Activated naive CD4-positive, alpha-beta T cell treated with anti-CD3 and anti-CD28 coated beads for 36 hours (primary cell): ENCODE measurements at regions of chr18 and their contacts with region 1.

Region 1: DNA sequence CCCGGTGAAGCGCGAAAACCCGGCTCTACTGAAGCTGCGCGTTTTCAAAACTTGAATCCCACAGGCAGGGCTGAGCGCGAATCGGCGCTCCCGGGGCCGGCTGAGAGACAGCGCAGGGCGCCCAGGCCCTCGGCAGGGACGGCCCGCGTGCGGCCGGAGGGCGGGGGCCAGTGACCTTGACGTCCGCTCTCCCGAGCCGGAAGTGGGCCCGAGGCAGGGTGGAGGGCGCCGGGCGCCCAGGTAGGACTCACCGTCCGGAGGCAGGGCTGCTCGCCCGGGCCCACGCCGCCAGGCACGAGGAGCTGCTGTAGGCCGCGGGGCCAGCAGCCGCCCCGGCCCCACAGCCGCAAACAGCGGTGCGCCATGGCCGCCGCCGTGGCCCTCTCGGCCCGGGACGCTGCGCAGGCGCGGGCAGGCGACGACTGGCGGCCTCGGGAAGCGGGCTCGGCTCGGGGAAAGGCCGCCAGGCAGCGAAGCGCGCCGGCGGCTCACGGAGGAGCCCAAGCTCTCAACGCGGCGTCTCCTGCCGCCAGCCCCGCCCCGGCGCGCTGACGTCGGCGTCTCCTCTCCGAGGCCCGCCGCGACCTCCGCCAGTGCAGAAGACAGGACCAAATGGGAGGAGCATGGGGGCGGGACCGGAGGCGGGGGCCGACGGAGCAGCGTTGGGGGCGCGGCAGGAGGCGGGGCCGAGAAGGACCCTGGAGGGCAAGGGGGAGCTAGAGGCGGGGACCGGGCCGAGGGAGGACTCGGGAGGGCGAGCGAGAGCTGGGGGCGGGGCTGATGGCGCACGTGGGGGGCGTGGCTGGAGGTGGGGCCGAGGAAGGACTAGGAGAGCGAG is at the start of gene AFG3L2:
- DNase-seq: peak; percentile 100
- H3K4me3 Mint-ChIP-seq: peak within 1 kb of the TSS; percentile 90
- H3K27ac Mint-ChIP-seq: peak within 1 kb of the TSS; percentile 82
- H3K4me1 Mint-ChIP-seq: peaks cover 47% of the 10 kb centered on the region
- H3K27me3 Mint-ChIP-seq: no peaks in the 10 kb centered on the region
- total RNA-seq, gene AFG3L2: 41.8 to 42.9 TPM

Region 2: DNA sequence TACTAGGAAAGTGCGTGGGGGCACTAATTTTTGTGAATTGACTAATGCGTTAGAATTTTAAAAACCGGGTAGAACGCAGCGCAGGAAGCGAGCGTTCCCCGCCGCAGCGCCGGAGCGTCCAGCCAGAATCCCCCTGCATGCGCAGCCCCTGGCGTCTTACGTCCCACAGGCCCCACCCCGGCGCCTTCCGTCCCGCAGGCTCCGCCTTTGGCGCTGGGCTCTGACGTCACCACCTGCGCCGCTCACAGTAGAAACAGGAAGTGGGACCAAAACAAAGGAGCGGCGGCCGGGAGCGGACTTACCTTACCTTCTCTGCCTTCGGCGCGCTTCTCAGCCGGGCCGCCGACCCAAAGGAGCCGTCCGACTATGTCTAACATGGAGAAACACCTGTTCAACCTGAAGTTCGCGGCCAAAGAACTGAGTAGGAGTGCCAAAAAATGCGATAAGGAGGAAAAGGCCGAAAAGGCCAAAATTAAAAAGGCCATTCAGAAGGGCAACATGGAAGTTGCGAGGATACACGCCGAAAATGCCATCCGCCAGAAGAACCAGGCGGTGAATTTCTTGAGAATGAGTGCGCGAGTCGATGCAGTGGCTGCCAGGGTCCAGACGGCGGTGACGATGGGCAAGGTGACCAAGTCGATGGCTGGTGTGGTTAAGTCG is 525.7 kb before region 1 on chr18 and contains the start of gene CHMP1B:
- CTCF ChIA-PET with region 1: no interaction called
- intact Hi-C with region 1: loop called (anchors 1 kb)
- DNase-seq: peak; percentile 98
- H3K4me3 Mint-ChIP-seq: peak within 1 kb of the TSS; percentile 100
- H3K27ac Mint-ChIP-seq: peak within 1 kb of the TSS; percentile 100
- H3K4me1 Mint-ChIP-seq: peaks cover 31% of the 10 kb centered on the region
- H3K27me3 Mint-ChIP-seq: no peaks in the 10 kb centered on the region
- total RNA-seq, gene CHMP1B: 23.2 TPM

Region 3: GRCh38 chr18:12053289-12053688 is 323.6 kb before region 1 on chr18:
- CTCF ChIA-PET with region 1: no interaction called
- intact Hi-C with region 1: no loop called
- DNase-seq: no peak
- H3K4me3 Mint-ChIP-seq: no peak overlapping the region
- H3K27ac Mint-ChIP-seq: no peak overlapping the region
- H3K4me1 Mint-ChIP-seq: peaks cover 6% of the 10 kb centered on the region
- H3K27me3 Mint-ChIP-seq: no peaks in the 10 kb centered on the region

Region 4: GRCh38 chr18:12308386-12309100 is 68.4 kb before region 1 on chr18:
- CTCF ChIA-PET with region 1: no interaction called
- intact Hi-C with region 1: loop called (anchors 2 kb)
- DNase-seq: peak; percentile 36
- H3K4me3 Mint-ChIP-seq: peak overlapping the region; percentile 62
- H3K27ac Mint-ChIP-seq: no peak overlapping the region
- H3K4me1 Mint-ChIP-seq: peaks cover 10% of the 10 kb centered on the region
- H3K27me3 Mint-ChIP-seq: peaks cover 43% of the 10 kb centered on the region

Region 5: GRCh38 chr18:12420831-12421421 is 44.0 kb after region 1 on chr18:
- CTCF ChIA-PET with region 1: no interaction called
- intact Hi-C with region 1: loop called (anchors 1 kb)
- DNase-seq: no peak
- H3K4me3 Mint-ChIP-seq: peak overlapping the region; percentile 68
- H3K27ac Mint-ChIP-seq: no peak overlapping the region
- H3K4me1 Mint-ChIP-seq: peaks cover 5% of the 10 kb centered on the region
- H3K27me3 Mint-ChIP-seq: peaks cover 4% of the 10 kb centered on the region

Region 6: GRCh38 chr18:12838178-12838634 is 461.3 kb after region 1 on chr18:
- CTCF ChIA-PET with region 1: no interaction called
- intact Hi-C with region 1: loop called (anchors 1 kb)
- DNase-seq: no peak
- H3K4me3 Mint-ChIP-seq: peak overlapping the region; percentile 46
- H3K27ac Mint-ChIP-seq: peak overlapping the region; percentile 84
- H3K4me1 Mint-ChIP-seq: peaks cover 52% of the 10 kb centered on the region
- H3K27me3 Mint-ChIP-seq: no peaks in the 10 kb centered on the region

Region 7: DNA sequence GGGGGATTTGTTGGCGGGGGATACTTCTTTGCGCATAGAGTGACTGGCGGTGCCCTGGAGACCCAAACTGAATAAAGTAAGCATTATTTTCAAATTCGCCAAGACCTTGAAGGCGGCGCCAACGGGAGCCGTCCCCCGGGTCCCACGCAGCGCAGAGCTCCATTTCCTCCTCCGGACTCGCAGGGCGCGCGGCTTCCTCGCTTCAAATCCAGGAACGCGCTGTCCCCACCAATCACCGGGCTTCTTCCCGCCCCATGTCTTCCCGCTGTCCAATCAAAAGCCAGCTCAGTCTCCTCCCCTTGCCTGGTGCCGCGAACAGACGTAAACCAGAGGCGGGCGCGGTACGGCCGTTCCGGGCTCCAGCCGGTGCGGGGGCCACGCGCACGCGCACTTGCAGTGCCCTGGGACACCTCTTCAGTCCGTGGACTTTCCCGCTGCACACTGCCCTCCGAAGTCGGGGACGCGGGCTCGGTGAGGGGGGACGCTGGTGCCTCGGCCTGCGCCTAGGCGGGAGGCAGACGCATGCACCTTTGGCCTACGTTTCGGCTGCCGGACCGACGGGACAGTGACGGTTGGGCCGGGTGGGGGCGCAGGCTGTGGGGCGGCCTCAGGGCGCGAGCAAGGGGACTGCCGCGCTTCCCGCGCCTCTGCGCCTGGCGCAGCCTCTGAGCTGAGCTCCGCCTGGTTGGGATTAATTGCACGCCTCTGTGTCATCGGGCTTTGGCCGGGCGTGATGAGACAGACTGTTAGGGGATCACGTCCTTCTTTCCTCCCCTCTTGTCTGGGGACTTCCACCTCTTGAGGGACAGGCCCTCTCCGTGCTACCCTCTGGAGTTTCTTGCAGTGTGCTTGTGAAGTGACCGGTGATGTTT is 614.3 kb after region 1 on chr18 and contains the start of gene CEP192:
- CTCF ChIA-PET with region 1: no interaction called
- intact Hi-C with region 1: loop called (anchors 1 kb)
- DNase-seq: peak; percentile 99
- H3K4me3 Mint-ChIP-seq: peak within 1 kb of the TSS; percentile 99
- H3K27ac Mint-ChIP-seq: peak within 1 kb of the TSS; percentile 97
- H3K4me1 Mint-ChIP-seq: peaks cover 10% of the 10 kb centered on the region
- H3K27me3 Mint-ChIP-seq: no peaks in the 10 kb centered on the region
- total RNA-seq, gene CEP192: 32.7 to 33.6 TPM